Ovary (tissue), 10 donors: ENCODE measurements at regions of chr6 and their contacts with region 1.

Region 1: DNA sequence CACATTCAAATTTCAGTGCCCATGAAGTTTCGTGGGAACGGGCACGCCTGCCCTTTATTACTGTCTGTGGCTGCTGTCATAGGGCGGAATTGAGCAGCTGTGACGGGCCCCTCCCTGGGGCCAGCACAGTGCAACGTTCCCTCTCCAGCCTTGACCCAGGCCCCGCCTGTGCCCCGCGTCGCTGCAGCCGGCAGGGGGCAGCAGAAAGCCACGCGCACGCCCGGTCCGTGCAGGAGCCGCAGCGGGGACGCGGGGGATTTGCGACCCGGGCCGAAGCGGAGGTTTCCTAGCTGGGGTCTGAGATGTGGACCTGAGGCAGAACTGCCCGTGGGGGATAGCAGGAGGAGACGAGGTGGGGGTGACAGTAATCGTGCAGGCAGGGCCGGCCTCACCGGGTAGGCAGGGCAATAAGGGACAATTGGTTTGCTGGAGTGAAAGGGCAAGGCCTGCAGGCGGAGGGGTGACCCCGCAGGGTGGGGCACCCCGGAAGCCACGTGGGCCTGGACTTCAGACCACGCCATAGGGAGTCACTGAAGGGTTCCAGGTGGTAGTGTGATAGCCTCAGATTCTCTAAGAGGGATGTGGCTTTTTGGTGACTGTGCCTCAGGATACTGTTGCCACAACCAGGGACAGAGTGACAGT is 54.4 kb downstream of the SYTL3 start:
- DNase-seq: peak; percentile 77 to 91 (median 83)
- H3K4me3 ChIP-seq: peak overlapping the region; percentile 45
- H3K27ac ChIP-seq: no peak overlapping the region
- H3K4me1 ChIP-seq: peaks cover 6% of the 10 kb centered on the region
- H3K27me3 ChIP-seq: no peaks in the 10 kb centered on the region
- CTCF ChIP-seq: peak; percentile 92 to 96 (median 92)
- EP300 ChIP-seq: no peak
- POLR2A ChIP-seq: no peak

Region 2: GRCh38 chr6:158819213-158819909 is 115.1 kb after region 1 on chr6 and contains the start of gene EZR:
- intact Hi-C with region 1: loop called in 1 of 4 experiments (anchors 5 kb)
- DNase-seq: peak; percentile 77 to 89 (median 85)
- H3K4me3 ChIP-seq: peak within 1 kb of the TSS; percentile 61
- H3K27ac ChIP-seq: peak within 1 kb of the TSS; percentile 94
- H3K4me1 ChIP-seq: peaks cover 11% of the 10 kb centered on the region
- H3K27me3 ChIP-seq: no peaks in the 10 kb centered on the region
- CTCF ChIP-seq: no peak
- EP300 ChIP-seq: no peak
- POLR2A ChIP-seq: peak; percentile 56
- total RNA-seq, gene EZR: 39.0 to 214 (median 116) TPM

Region 3: GRCh38 chr6:158972241-158973233 is 268.2 kb after region 1 on chr6:
- intact Hi-C with region 1: loop called (anchors 2 to 10 kb)
- DNase-seq: no peak
- H3K4me3 ChIP-seq: no peak overlapping the region
- H3K27ac ChIP-seq: no peak overlapping the region
- H3K4me1 ChIP-seq: no peaks in the 10 kb centered on the region
- H3K27me3 ChIP-seq: no peaks in the 10 kb centered on the region
- CTCF ChIP-seq: peak; percentile 22 to 56 (median 53)
- EP300 ChIP-seq: no peak
- POLR2A ChIP-seq: no peak

Region 4: GRCh38 chr6:159134701-159135364 is 430.5 kb after region 1 on chr6:
- intact Hi-C with region 1: loop called in 1 of 4 experiments (anchors 10 kb)
- DNase-seq: peak in 4 of 5 donors; percentile 33 to 62 (median 39)
- H3K4me3 ChIP-seq: no peak overlapping the region
- H3K27ac ChIP-seq: no peak overlapping the region
- H3K4me1 ChIP-seq: peaks cover 4% of the 10 kb centered on the region
- H3K27me3 ChIP-seq: no peaks in the 10 kb centered on the region
- CTCF ChIP-seq: peak in 2 of 3 donors; percentile 49 to 57
- EP300 ChIP-seq: no peak
- POLR2A ChIP-seq: no peak